Common myeloid progenitor, CD34-positive (primary cell): ENCODE measurements at regions of chr4 and their contacts with region 1.

Region 1: GRCh38 chr4:40309250-40309774 is 25.8 kb upstream of the CHRNA9 start:
- DNase-seq: peak; percentile 87 to 92 (median 90)
- H3K4me3 ChIP-seq: peak overlapping the region in 2 of 7 experiments; percentile 44 to 57
- H3K27ac ChIP-seq: peak overlapping the region; percentile 80 to 85
- H3K4me1 ChIP-seq: peaks cover 52 to 97% (median 83%) of the 10 kb centered on the region in 4 experiments
- H3K27me3 ChIP-seq: no peaks in the 10 kb centered on the region

Region 2: GRCh38 chr4:40114206-40114605 is 195.1 kb before region 1 on chr4:
- CTCF ChIA-PET with region 1: no interaction called
- POLR2A ChIA-PET with region 1: no interaction called
- DNase-seq: no peak
- H3K4me3 ChIP-seq: no peak overlapping the region
- H3K27ac ChIP-seq: no peak overlapping the region
- H3K4me1 ChIP-seq: peaks cover 0 to 4% (median 0%) of the 10 kb centered on the region in 4 experiments
- H3K27me3 ChIP-seq: no peaks in the 10 kb centered on the region

Region 3: DNA sequence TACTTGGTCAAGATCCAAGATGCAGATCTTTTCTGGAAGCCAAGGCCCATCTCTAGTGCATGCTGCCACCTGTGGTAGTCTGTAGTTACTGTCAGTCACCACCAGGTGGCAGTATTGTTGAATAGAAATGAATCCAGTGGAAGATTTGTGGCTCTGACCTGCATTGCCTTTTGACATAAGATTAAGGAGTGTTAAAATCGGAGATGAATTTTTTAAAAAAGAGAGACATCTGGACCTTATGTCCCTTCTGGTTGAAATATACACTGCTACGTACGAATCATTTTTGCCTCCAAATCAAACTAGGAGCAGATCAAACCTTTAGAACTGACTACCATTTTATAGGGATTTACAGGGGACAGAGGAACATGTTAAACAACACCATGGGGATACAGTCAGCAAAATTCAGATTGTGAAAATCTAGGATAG is 159.3 kb before region 1 on chr4:
- CTCF ChIA-PET with region 1: interaction called, 22 read pairs
- POLR2A ChIA-PET with region 1: no interaction called
- DNase-seq: peak; percentile 79 to 90 (median 89)
- H3K4me3 ChIP-seq: no peak overlapping the region
- H3K27ac ChIP-seq: no peak overlapping the region
- H3K4me1 ChIP-seq: peaks cover 0 to 9% (median 5%) of the 10 kb centered on the region in 4 experiments
- H3K27me3 ChIP-seq: no peaks in the 10 kb centered on the region

Region 4: GRCh38 chr4:40199999-40200874 is 109.1 kb before region 1 on chr4:
- CTCF ChIA-PET with region 1: interaction called, 15 read pairs
- POLR2A ChIA-PET with region 1: interaction called, 8 read pairs
- DNase-seq: peak in 2 of 3 donors; percentile 67 to 76
- H3K4me3 ChIP-seq: peak overlapping the region in 6 of 7 experiments; percentile 78 to 99 (median 90)
- H3K27ac ChIP-seq: peak overlapping the region; percentile 91 to 95
- H3K4me1 ChIP-seq: peaks cover 58 to 82% (median 75%) of the 10 kb centered on the region in 4 experiments
- H3K27me3 ChIP-seq: no peaks in the 10 kb centered on the region

Region 5: GRCh38 chr4:40228497-40229365 is 80.6 kb before region 1 on chr4:
- CTCF ChIA-PET with region 1: interaction called, 13 read pairs
- POLR2A ChIA-PET with region 1: interaction called, 4 read pairs
- DNase-seq: peak in 1 of 3 donors; percentile 28
- H3K4me3 ChIP-seq: no peak overlapping the region
- H3K27ac ChIP-seq: peak overlapping the region in 1 of 2 experiments; percentile 14
- H3K4me1 ChIP-seq: peaks cover 0 to 30% (median 19%) of the 10 kb centered on the region in 4 experiments
- H3K27me3 ChIP-seq: no peaks in the 10 kb centered on the region

Region 6: GRCh38 chr4:40238700-40239548 is 70.4 kb before region 1 on chr4:
- CTCF ChIA-PET with region 1: interaction called, 11 read pairs
- POLR2A ChIA-PET with region 1: interaction called, 5 read pairs
- DNase-seq: peak in 2 of 3 donors; percentile 61 to 71
- H3K4me3 ChIP-seq: peak overlapping the region in 2 of 7 experiments; percentile 21 to 39
- H3K27ac ChIP-seq: peak overlapping the region in 1 of 2 experiments; percentile 89
- H3K4me1 ChIP-seq: peaks cover 13 to 69% (median 57%) of the 10 kb centered on the region in 4 experiments
- H3K27me3 ChIP-seq: no peaks in the 10 kb centered on the region

Region 7: DNA sequence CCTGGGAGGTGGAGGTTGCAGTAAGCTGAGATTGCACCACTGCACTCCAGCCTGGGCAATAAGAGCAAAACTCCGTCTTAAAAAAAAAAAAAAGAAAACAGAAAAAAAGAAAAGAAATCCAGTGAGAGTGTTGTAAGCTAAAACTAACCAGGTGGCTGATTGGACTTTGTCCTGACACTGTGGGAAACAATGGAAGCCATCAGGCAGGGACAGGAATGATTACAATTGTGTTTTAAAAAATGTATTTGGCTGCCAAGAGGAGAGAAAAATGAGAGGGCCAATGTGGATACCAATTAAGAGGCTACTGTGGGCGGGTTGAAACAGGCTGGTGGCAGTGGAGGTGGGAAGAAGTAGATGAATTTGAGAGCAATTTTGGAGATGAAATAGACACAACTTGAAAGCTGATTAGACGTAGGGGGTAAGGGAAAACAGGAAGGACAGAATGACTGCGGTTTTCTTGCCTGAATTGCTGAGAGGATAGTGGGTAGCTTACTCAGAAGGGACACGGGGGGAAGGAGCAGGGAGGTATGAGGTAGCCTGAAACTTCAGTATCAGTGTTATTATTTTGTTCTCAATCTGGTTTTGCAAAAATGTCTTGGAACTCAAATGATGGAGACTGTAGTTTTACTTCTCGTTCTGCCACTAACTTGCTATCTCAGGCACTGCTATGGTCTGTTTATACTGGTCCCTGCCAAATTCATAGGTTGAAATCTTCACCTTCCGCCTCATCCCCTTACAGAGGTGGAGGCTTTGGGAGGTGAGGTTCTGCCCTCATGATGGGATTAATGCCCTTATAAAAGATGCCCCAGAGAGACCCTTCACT is 19.7 kb before region 1 on chr4:
- CTCF ChIA-PET with region 1: interaction called, 17 read pairs
- POLR2A ChIA-PET with region 1: interaction called, 4 read pairs
- DNase-seq: peak in 2 of 3 donors; percentile 54 to 74
- H3K4me3 ChIP-seq: peak overlapping the region in 2 of 7 experiments; percentile 3 to 6
- H3K27ac ChIP-seq: peak overlapping the region; percentile 16 to 47
- H3K4me1 ChIP-seq: peaks cover 11 to 39% (median 29%) of the 10 kb centered on the region in 4 experiments
- H3K27me3 ChIP-seq: no peaks in the 10 kb centered on the region

Region 8: GRCh38 chr4:40325189-40326019 is 16.1 kb after region 1 on chr4:
- CTCF ChIA-PET with region 1: interaction called, 84 read pairs
- POLR2A ChIA-PET with region 1: interaction called, 9 read pairs
- DNase-seq: peak; percentile 81 to 92 (median 91)
- H3K4me3 ChIP-seq: no peak overlapping the region
- H3K27ac ChIP-seq: no peak overlapping the region
- H3K4me1 ChIP-seq: peaks cover 3 to 45% (median 38%) of the 10 kb centered on the region in 4 experiments
- H3K27me3 ChIP-seq: no peaks in the 10 kb centered on the region

Region 9: DNA sequence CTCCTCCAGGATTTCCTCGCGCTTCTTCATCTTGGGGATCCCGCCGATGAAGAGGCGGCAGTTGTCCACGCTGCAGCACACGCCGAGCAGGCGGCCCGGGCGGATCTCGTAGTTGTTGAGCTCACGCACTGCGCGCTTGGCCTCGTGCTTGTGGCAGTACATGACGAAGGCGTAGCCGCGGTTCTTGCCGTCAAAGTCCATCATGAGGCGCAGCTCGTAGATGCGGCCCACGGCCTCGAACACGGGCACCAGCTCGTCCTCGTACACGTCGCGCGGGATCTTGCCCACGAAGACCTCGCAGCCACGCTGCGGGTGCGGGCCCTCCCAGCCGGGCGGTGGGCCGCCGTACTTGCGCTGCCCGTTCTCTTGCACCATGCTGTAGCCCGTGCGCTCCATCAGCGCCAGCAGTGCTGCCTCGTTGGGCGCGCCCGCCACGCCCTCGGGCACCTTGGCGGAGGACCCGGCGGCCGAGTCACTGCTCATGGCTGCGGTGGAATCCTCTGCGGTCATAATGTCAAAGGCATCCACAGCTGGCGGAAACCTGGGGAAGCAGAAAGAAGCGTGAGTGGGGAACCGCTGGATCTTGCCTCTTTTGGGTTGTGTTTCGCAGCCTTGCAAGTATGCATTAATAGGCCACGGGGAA is 129.2 kb after region 1 on chr4:
- CTCF ChIA-PET with region 1: no interaction called
- POLR2A ChIA-PET with region 1: no interaction called
- DNase-seq: no peak
- H3K4me3 ChIP-seq: no peak overlapping the region
- H3K27ac ChIP-seq: no peak overlapping the region
- H3K4me1 ChIP-seq: no peaks in the 10 kb centered on the region
- H3K27me3 ChIP-seq: no peaks in the 10 kb centered on the region